ENCODE measurements at regions of chr14 and their contacts with region 1.

Region 1: GRCh38 chr14:29039171-29039570 is 272.6 kb downstream of the FOXG1 start:
- DNase-seq: peak; percentile 8
- ATAC-seq: peak; percentile 71; the same call in 1 of the 2 replicates
- H3K4me3 Mint-ChIP-seq: no peak overlapping the region
- H3K27ac Mint-ChIP-seq: no peak overlapping the region
- H3K4me1 Mint-ChIP-seq: peaks cover 9% of the 10 kb centered on the region
- H3K27me3 Mint-ChIP-seq: no peaks in the 10 kb centered on the region
- CTCF ChIP-seq: no peak

Region 2: GRCh38 chr14:29061702-29062101 is 22.5 kb after region 1 on chr14:
- CTCF ChIA-PET with region 1: no interaction called
- POLR2A ChIA-PET with region 1: interaction called, 15 read pairs
- DNase-seq: no peak
- ATAC-seq: no peak
- H3K4me3 Mint-ChIP-seq: no peak overlapping the region
- H3K27ac Mint-ChIP-seq: no peak overlapping the region
- H3K4me1 Mint-ChIP-seq: no peaks in the 10 kb centered on the region
- H3K27me3 Mint-ChIP-seq: no peaks in the 10 kb centered on the region
- CTCF ChIP-seq: no peak